Activated CD4-positive, alpha-beta T cell treated with anti-CD3 and anti-CD28 coated beads, Interleukin-2, amount 10 ng/mL, durations not matched to agents 24 days and 14 days (primary cell): ENCODE measurements at regions of chr5 and their contacts with region 1.

Region 1: DNA sequence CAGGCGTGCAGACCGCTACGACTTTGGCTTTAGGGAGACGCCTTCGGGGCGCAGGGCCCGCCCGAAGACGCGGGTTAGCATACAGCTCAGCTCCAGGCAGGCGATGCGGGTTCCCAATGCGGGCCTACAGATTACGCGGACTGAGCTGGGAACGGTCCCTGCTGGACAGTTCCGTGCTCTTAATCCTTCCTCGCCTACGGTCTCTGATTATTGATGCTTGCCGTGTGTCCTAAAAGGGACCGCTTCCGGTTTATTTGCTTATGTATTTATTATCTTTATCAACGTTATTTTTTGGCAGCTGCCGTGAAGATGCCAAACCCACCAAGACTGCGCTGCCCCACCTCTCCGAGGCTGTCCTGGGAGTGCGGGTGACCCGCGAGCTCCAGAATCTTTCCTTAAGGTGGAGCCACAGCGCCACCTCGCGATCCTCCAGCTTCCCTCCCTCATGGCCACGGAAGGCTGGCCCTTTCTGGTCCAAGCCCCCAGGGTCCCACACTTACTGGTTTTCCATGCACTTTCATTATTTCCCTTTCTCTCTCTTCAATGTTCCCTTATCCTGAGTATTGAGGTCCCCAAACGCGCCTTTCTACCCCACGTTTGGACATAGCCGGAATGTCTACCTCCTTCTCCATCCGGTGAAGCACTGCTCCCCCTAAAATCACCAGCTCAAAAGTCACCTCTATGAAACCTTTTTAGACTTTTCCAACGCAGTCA is 7.0 kb upstream of the EBF1 start:
- DNase-seq: peak; percentile 90
- H3K4me3 Mint-ChIP-seq: peak overlapping the region; percentile 79
- H3K27ac Mint-ChIP-seq: no peak overlapping the region
- H3K4me1 Mint-ChIP-seq: peaks cover 18% of the 10 kb centered on the region
- H3K27me3 Mint-ChIP-seq: peaks cover 79% of the 10 kb centered on the region

Region 2: DNA sequence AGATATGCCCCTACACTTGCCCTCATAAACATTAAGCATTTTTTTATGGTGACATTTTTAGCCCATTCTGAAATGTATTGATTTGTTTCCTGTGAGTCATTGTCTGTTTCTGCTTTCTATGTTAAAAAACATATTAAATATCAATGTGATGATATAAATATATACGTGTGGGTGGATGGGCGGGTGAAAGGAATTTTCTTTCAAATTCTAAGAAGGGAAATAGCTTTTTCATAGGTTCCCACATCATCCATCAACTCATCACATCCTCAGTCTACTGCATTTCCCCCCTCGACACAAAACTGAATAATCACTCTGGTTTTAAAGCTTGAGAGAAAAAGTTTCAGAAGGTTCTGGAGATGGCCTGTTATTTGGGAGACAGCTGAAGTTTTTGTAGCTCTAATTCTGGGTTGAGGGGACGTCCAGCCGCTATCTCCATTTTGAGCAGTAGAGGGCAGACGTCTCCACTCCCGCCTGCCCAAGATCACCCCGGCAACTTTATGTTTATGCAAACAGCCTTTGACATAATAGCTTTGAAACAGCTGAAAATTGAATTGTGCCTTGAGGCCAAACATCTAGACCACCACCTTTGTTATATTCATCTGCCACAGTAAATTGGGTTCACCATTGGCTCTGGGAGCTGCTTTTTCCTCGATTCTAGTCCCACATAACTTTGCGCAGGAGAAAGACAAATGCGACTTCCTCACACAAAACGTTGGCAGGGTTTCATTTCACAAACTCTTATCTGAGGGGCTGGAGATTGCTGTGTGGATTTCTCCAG is 1031.5 kb before region 1 on chr5:
- intact Hi-C with region 1: loop called (anchors 2 kb)
- DNase-seq: peak; percentile 83
- H3K4me3 Mint-ChIP-seq: no peak overlapping the region
- H3K27ac Mint-ChIP-seq: no peak overlapping the region
- H3K4me1 Mint-ChIP-seq: no peaks in the 10 kb centered on the region
- H3K27me3 Mint-ChIP-seq: peaks cover 17% of the 10 kb centered on the region

Region 3: GRCh38 chr5:158695595-158696330 is 411.0 kb before region 1 on chr5:
- intact Hi-C with region 1: loop called (anchors 1 kb)
- DNase-seq: peak; percentile 90
- H3K4me3 Mint-ChIP-seq: no peak overlapping the region
- H3K27ac Mint-ChIP-seq: no peak overlapping the region
- H3K4me1 Mint-ChIP-seq: peaks cover 2% of the 10 kb centered on the region
- H3K27me3 Mint-ChIP-seq: peaks cover 14% of the 10 kb centered on the region

Region 4: DNA sequence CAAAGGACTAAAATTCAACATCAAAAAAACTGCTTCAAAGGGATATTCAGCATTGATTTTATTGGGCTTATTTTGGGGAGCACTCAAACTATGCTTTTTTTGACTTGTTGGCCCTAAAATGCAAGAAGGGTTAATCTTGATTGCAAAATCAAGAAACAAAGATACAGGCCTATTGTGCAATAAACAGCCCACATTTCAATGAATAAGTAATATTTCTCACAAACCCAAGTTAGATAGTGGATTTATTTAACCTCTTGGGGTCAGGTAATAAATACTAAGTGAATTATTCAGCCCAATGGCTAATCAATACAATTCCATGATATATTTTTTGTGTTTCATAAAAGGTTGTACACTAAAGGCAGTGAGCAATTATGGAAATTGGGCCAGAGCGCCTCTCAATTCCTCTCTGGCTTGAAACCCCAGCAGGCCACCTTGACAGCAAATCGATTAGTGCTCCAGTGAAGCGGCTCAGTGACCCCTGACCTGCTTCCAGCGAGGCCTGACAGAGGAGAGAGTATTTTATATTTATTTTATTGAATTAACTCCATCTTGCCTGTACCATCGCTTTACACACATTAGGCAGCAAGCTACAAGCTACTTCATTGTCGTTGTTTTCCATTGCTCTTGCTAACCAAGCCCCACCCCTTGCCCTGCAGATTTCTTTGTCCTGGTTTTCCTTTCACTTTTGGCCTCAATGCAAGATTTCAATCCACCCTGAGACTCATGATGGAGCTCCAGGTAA is 72.5 kb before region 1 on chr5:
- intact Hi-C with region 1: no loop called
- DNase-seq: no peak
- H3K4me3 Mint-ChIP-seq: no peak overlapping the region
- H3K27ac Mint-ChIP-seq: no peak overlapping the region
- H3K4me1 Mint-ChIP-seq: no peaks in the 10 kb centered on the region
- H3K27me3 Mint-ChIP-seq: peaks cover 14% of the 10 kb centered on the region